Heart left ventricle (tissue), 16 donors: ENCODE measurements at regions of chr15 and their contacts with region 1.

Region 1: DNA sequence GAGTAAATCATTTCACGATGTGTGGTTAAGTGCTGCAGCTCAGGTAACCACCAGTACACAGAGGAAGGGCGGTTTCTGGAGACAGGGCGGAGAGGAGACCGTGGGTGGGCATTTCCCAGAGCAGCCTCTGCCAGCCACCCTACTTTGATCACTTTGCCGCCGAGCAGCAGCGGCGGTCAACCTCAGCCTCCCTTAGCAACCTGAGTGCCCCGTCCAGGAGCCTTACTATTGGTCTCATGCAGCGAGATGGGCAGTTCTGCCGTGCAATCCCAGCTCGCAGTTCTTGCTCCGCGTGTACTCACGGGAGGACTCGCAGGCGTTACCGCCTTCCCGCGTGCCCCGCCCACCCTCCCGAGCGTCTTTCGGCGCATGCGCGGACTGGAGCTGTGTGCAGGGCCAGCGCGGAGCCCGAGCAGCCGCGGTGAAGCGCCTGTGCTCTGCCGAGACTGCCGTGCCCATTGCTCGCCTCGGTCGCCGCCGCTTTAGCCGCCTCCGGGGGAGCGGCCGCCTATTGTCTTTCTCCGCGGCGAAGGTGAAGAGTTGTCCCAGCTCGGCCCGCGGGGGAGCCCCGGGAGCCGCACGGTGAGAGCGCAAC is at the start of gene AKAP13:
- DNase-seq: peak; percentile 98 to 99 (median 99)
- ATAC-seq: peak; percentile 89 to 96 (median 93)
- H3K4me3 ChIP-seq: peak within 1 kb of the TSS; percentile 73 to 98 (median 90)
- H3K27ac ChIP-seq: peak within 1 kb of the TSS; percentile 77 to 98 (median 94)
- H3K4me1 ChIP-seq: peaks cover 0 to 38% (median 24%) of the 10 kb centered on the region in 12 donors
- H3K27me3 ChIP-seq: no peaks in the 10 kb centered on the region
- CTCF ChIP-seq: no peak
- POLR2A ChIP-seq: peak; percentile 61 to 96
- total RNA-seq, gene AKAP13: 259 to 598 (median 357) TPM

Region 2: GRCh38 chr15:85306946-85307708 is 73.2 kb before region 1 on chr15:
- intact Hi-C with region 1: loop called in 1 of 10 experiments (anchors 10 kb)
- DNase-seq: no peak
- ATAC-seq: no peak
- H3K4me3 ChIP-seq: no peak overlapping the region
- H3K27ac ChIP-seq: no peak overlapping the region
- H3K4me1 ChIP-seq: peaks cover 0 to under 1% (median 0%) of the 10 kb centered on the region in 12 donors
- H3K27me3 ChIP-seq: no peaks in the 10 kb centered on the region
- CTCF ChIP-seq: no peak
- POLR2A ChIP-seq: no peak

Region 3: GRCh38 chr15:85337425-85338074 is 42.8 kb before region 1 on chr15:
- intact Hi-C with region 1: loop called in 5 of 10 experiments (anchors 5 to 10 kb)
- DNase-seq: peak in 3 of 5 donors; percentile 30 to 44 (median 42)
- ATAC-seq: peak in 3 of 4 donors; percentile 36 to 71 (median 48)
- H3K4me3 ChIP-seq: peak overlapping the region in 2 of 12 donors; percentile 9 to 20
- H3K27ac ChIP-seq: peak overlapping the region; percentile 63 to 97 (median 86)
- H3K4me1 ChIP-seq: peaks cover 2 to 53% (median 27%) of the 10 kb centered on the region in 12 donors
- H3K27me3 ChIP-seq: no peaks in the 10 kb centered on the region
- CTCF ChIP-seq: no peak
- POLR2A ChIP-seq: no peak

Region 4: GRCh38 chr15:85421116-85421925 is 41.0 kb after region 1 on chr15:
- intact Hi-C with region 1: loop called in 1 of 10 experiments (anchors 5 kb)
- DNase-seq: no peak
- ATAC-seq: peak in 3 of 4 donors; percentile 64 to 72 (median 71)
- H3K4me3 ChIP-seq: peak overlapping the region in 1 of 12 donors; percentile 2
- H3K27ac ChIP-seq: peak overlapping the region in 11 of 12 donors; percentile 1 to 63 (median 25)
- H3K4me1 ChIP-seq: peaks cover 5 to 88% (median 54%) of the 10 kb centered on the region in 12 donors
- H3K27me3 ChIP-seq: no peaks in the 10 kb centered on the region
- CTCF ChIP-seq: no peak
- POLR2A ChIP-seq: no peak

Region 5: DNA sequence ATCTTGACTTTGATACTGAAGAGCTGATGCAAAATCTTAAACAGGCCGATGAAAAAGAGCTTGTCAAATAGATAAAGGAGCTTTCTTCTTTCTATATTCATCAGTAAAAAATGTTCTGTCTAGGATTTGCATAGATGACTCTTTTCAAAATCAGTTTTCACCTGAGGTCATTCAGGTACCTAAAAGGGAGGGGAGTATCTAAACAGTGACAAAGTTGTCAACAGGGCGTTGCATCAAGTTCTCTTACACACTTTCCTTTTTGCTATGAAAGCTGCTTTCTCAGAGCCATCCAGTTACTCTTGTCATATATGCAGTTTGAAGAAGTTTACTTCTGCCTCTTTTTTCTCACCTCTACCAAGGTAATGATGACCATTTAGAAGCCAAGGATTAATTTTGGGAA is 60.1 kb after region 1 on chr15:
- intact Hi-C with region 1: no loop called
- DNase-seq: no peak
- ATAC-seq: no peak
- H3K4me3 ChIP-seq: no peak overlapping the region
- H3K27ac ChIP-seq: peak overlapping the region in 4 of 12 donors; percentile 0 to 42 (median 22)
- H3K4me1 ChIP-seq: peaks cover 4 to 52% (median 42%) of the 10 kb centered on the region in 12 donors
- H3K27me3 ChIP-seq: no peaks in the 10 kb centered on the region
- CTCF ChIP-seq: no peak
- POLR2A ChIP-seq: no peak

Region 6: DNA sequence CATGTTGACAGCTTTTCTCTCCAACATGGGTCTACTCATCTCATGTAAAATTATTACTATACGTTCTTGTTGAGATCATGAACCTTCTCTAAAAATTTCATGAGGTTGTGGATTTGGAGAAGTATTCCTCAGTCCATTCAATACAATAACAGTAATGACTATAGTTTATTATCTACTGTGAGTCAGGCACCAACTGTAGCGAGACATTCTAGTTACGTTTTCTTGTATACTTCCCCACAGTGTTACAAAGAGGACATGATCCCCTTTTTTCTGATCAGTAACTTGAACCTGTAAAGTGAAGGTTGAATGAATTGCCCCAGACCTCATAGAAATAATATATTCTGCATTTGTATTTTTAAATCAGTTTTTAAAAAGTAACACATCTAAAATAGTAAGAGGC is 76.5 kb after region 1 on chr15:
- intact Hi-C with region 1: loop called in 2 of 10 experiments (anchors 5 to 10 kb)
- DNase-seq: no peak
- ATAC-seq: no peak
- H3K4me3 ChIP-seq: no peak overlapping the region
- H3K27ac ChIP-seq: no peak overlapping the region
- H3K4me1 ChIP-seq: peaks cover 0 to 89% (median 42%) of the 10 kb centered on the region in 12 donors
- H3K27me3 ChIP-seq: no peaks in the 10 kb centered on the region
- CTCF ChIP-seq: no peak
- POLR2A ChIP-seq: no peak

Region 7: GRCh38 chr15:85475317-85475701 is 95.0 kb after region 1 on chr15:
- intact Hi-C with region 1: loop called in 1 of 10 experiments (anchors 10 kb)
- DNase-seq: no peak
- ATAC-seq: peak in 1 of 4 donors; percentile 8
- H3K4me3 ChIP-seq: no peak overlapping the region
- H3K27ac ChIP-seq: no peak overlapping the region
- H3K4me1 ChIP-seq: peaks cover 3 to 88% (median 71%) of the 10 kb centered on the region in 12 donors
- H3K27me3 ChIP-seq: no peaks in the 10 kb centered on the region
- CTCF ChIP-seq: no peak
- POLR2A ChIP-seq: no peak

Region 8: DNA sequence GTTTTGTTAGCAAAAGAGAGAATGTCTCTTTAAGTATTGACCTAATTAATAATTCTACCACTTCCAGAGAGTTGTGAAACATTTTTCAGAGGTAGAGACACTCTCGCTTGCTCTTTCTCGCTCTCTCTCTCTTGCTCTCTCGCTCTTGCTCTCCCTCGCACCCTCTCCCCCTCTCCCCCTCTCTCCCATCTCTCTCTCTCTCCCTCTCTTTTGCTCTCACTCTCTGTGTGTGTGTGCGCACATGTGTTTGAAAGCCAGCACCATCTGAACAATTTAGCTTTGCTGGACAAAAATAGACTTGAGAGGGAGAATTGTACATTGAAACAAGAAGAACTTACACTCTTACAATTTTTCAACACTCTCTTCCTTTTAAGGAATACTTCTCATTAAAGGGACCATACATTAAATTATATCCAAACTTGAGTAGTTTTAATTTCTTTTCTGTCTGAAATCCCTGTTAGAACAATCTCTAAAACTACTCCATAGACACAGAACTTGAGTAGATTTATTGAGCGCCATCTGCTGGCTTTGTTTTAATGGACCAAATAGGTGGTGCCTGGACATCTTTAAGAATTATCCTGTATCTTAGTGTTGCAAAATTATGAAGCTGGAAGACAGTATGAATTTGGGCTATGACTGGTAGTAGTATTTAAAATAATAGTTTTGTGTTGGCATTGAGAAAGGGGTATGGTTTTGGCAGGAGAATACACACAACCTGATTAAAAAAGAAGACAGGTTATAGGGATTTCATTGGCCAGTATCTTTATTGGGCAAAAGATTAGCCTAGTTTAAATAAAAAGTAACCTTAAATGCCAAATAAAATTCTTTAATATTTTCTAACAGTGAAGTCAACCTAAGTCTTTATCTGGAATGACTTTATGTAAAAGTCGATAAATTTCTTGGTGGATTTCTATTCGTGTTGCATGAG is 124.7 kb after region 1 on chr15:
- intact Hi-C with region 1: loop called in 2 of 10 experiments (anchors 10 kb)
- DNase-seq: peak in 2 of 5 donors; percentile 39 to 62
- ATAC-seq: peak in 3 of 4 donors; percentile 50 to 66 (median 58)
- H3K4me3 ChIP-seq: no peak overlapping the region
- H3K27ac ChIP-seq: peak overlapping the region in 10 of 12 donors; percentile 29 to 83 (median 64)
- H3K4me1 ChIP-seq: peaks cover 2 to 91% (median 48%) of the 10 kb centered on the region in 12 donors
- H3K27me3 ChIP-seq: no peaks in the 10 kb centered on the region
- CTCF ChIP-seq: peak; percentile 29 to 79 (median 62)
- POLR2A ChIP-seq: no peak